ENCODE measurements at regions of chr12 and their contacts with region 1.

Region 1: GRCh38 chr12:71685914-71686665 is at the start of gene TMEM19:
- DNase-seq: peak; percentile 85 to 94
- ATAC-seq: peak; percentile 99
- H3K4me3 ChIP-seq: peak within 1 kb of the TSS; percentile 58
- H3K27ac ChIP-seq: peak within 1 kb of the TSS; percentile 87 to 96
- H3K4me1 ChIP-seq: peaks cover 29% of the 10 kb centered on the region; the same call in 2 of the 3 replicates
- CTCF ChIP-seq: peak; percentile 34; the same call in 1 of the 3 replicates
- EP300 ChIP-seq: no peak
- POLR2A ChIP-seq: peak; percentile 92
- RAD21 ChIP-seq: peak; percentile 17 to 39; a peak in 4 of 5 replicates
- polyA plus RNA-seq, gene TMEM19: 62.8 and 78.8 TPM in 2 replicates

Region 2: GRCh38 chr12:71551529-71551928 is 134.6 kb before region 1 on chr12:
- CTCF ChIA-PET with region 1: no interaction called
- POLR2A ChIA-PET with region 1: no interaction called
- DNase-seq: peak in 1 of 2 experiments; percentile 27
- ATAC-seq: peak in 1 of 2 experiments; percentile 59; a peak in 2 of 6 replicates
- H3K4me3 ChIP-seq: no peak overlapping the region
- H3K27ac ChIP-seq: no peak overlapping the region
- H3K4me1 ChIP-seq: peaks cover 2% of the 10 kb centered on the region; the same call in 2 of the 3 replicates
- CTCF ChIP-seq: peak; percentile 33
- EP300 ChIP-seq: no peak
- POLR2A ChIP-seq: no peak
- RAD21 ChIP-seq: peak; percentile 42 to 56; a peak in 4 of 5 replicates

Region 3: DNA sequence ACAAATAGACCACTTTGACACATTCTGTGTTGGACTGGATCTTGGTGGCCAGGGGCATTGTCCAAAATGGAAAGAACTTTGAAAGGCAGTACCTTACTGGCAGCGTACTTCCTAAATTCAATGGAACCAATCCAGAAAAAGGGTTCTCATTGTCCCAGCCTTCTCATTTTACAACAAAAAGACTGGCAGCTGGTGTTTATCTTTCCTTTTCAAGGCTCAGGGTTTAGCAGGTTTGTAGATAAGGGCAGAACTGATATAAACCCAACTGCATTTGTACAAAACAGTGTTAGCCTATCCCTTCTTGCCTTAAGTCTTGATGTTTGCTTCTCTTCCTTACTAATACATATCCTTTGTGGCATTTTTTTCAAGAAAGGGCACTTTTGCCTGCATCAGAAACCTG is 14.3 kb before region 1 on chr12:
- CTCF ChIA-PET with region 1: interaction called, 24 read pairs
- POLR2A ChIA-PET with region 1: interaction called, 5 read pairs
- DNase-seq: no peak
- ATAC-seq: no peak
- H3K4me3 ChIP-seq: no peak overlapping the region
- H3K27ac ChIP-seq: no peak overlapping the region
- H3K4me1 ChIP-seq: no peaks in the 10 kb centered on the region
- CTCF ChIP-seq: no peak
- EP300 ChIP-seq: no peak
- POLR2A ChIP-seq: no peak
- RAD21 ChIP-seq: no peak

Region 4: DNA sequence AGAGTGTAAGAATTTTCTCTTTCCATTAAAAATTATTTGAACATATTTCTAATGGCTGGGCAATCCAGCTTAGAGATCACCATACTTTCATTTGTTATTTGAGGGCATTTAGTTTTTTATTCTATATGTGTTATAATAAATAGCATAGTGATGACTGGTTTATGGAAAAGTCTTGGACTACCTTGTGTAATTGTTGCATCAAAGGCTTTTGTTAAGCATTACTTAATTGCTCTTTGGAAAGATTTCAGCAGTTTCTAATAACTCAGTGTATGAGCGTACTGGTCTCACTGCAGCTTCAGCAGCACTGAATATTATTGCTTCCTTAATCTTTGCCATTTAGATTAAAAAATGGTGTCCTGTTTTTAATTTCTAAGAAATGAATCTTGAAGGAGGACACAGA is 22.6 kb after region 1 on chr12:
- CTCF ChIA-PET with region 1: interaction called, 11 read pairs
- POLR2A ChIA-PET with region 1: interaction called, 6 read pairs
- DNase-seq: no peak
- ATAC-seq: no peak
- H3K4me3 ChIP-seq: no peak overlapping the region
- H3K27ac ChIP-seq: no peak overlapping the region
- H3K4me1 ChIP-seq: peaks cover 15% of the 10 kb centered on the region
- CTCF ChIP-seq: no peak
- EP300 ChIP-seq: no peak
- POLR2A ChIP-seq: no peak
- RAD21 ChIP-seq: no peak